ENCODE measurements at regions of chr15 and their contacts with region 1.

Region 1: DNA sequence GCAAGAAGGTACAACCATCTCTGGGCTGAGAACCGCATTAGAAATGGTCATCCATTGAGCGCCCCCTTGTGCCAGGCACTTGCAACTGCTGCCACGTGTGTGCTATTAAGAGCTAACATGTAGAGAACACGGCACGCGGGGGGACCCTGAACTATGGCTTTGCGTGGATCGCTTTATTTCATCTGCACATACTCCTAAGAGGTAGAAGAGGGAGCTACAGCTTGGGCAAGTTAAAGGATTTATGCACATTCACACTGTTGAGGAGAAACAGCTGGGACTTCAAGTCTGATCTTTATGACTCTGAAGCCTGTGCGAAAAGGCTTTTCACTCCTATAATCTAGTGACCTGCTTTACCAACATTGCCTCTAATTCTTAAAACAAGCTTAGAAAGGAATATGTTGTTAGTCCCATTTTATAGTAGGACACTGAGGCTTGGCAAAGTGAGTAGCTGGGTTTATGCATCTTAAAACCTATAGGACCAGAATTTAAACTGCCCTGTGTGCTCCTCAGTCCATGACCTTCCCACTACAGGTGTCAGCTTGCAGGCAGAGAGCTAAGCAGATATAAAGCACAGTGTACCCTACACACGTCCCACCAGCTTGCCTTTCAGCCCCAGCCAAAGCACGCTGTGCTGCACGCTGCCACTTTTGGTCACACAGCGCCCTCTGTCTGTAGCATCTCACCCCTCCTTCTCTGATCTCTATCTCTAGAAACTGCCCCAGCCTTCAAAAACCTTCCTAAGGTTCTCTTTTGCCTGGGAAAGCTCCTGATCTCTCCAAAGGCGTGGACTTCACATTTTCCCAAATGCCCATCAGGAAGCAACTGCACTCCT is 57.8 kb downstream of the STARD5 start:
- DNase-seq: peak; percentile 80
- H3K4me3 ChIP-seq: no peak overlapping the region
- H3K27ac ChIP-seq: no peak overlapping the region
- H3K4me1 ChIP-seq: peaks cover 5% of the 10 kb centered on the region
- H3K27me3 ChIP-seq: peaks cover 0 to 2% of the 10 kb centered on the region in 2 experiments
- CTCF ChIP-seq: peak; percentile 93 to 94
- POLR2A ChIP-seq: no peak

Region 2: DNA sequence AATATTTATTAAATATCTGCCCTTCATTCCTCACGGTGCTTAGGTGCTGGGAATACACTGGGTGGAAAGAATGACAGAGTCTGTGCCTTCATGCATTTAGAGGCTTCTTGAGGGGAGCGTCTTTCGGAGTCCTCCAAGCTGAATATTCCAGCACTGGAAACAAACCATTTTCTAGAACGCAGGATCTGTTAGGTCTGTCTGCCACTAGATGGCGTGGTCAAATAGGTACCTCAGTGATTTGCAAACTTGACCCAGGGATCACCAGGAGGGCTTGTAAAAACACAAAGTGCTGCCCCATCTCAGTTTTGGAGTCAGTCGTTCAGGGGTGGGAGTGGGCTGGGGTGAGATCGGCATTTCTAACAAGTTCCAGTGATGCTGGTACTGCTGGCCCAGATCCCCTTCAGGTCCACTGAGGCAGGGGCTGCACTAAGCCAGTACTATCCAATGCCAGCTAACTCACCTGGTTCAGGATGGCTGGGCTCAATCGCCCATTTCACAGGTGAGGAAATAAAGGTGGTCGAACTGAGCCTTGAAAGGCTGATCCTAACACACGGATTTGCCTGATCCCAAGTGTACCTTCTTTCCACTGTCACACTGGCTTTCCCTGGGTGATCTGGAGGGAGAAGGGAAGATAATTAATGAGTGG is 847.1 kb before region 1 on chr15:
- CTCF ChIA-PET with region 1: interaction called, 10 read pairs
- POLR2A ChIA-PET with region 1: no interaction called
- dilution Hi-C with region 1: no loop called
- intact Hi-C with region 1: loop called (anchors 2 kb)
- DNase-seq: peak; percentile 16
- H3K4me3 ChIP-seq: no peak overlapping the region
- H3K27ac ChIP-seq: no peak overlapping the region
- H3K4me1 ChIP-seq: no peaks in the 10 kb centered on the region
- H3K27me3 ChIP-seq: peaks cover 0 to 4% of the 10 kb centered on the region in 2 experiments
- CTCF ChIP-seq: peak; percentile 63 to 73
- POLR2A ChIP-seq: no peak

Region 3: DNA sequence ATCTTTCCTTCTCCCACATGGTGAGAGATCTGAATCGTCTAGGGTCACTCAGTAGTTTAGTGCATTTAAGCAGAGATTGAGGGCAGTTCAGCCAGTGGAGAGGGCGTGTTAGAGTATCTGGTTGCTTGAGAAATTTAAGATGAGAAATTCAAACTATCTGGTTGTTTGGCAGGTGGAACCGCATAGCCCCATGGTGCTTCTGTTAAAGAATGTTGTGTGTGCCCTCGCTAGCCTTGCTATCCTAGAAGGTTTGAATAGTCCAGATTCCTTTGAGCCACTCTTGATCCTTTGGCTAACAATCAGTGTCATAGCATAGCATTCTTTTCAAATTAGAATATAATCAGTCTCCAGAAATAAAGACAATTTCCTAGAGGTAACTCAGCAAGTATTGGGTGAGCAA is 539.0 kb before region 1 on chr15:
- CTCF ChIA-PET with region 1: no interaction called
- POLR2A ChIA-PET with region 1: no interaction called
- dilution Hi-C with region 1: no loop called
- intact Hi-C with region 1: no loop called
- DNase-seq: no peak
- H3K4me3 ChIP-seq: no peak overlapping the region
- H3K27ac ChIP-seq: no peak overlapping the region
- H3K4me1 ChIP-seq: no peaks in the 10 kb centered on the region
- H3K27me3 ChIP-seq: no peaks in the 10 kb centered on the region
- CTCF ChIP-seq: no peak
- POLR2A ChIP-seq: no peak

Region 4: DNA sequence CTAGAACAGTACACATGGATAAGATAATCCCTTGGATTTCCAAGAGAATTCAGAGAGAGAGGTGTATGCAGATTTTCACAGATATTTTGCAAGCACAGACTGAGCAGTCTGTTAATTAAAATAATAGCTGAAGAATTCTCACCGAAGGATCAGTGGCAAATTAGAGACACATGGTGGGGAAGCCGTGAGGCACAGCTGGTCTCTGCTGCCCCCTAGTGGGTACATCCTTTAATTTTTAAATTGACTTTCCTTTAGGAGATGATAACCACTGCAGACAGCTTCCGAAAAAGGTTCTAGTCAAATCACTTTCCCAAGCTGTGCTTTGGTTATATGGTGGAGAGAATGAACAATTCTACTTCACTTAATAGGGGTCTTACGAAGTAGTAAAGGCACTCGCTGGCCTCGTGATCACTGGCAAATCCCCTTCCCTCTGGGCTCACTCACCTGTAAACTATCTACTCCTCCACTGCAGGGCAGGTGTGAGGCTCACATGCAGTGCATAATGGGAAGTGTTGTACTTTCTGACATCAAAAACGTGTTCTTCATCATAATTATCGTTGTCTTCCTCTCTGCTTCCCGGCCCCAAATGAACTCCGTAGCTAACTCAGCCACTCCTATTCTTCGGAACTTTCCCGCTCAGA is 296.0 kb before region 1 on chr15:
- CTCF ChIA-PET with region 1: interaction called, 199 read pairs
- POLR2A ChIA-PET with region 1: no interaction called
- dilution Hi-C with region 1: no loop called
- intact Hi-C with region 1: no loop called
- DNase-seq: peak; percentile 64
- H3K4me3 ChIP-seq: no peak overlapping the region
- H3K27ac ChIP-seq: no peak overlapping the region
- H3K4me1 ChIP-seq: no peaks in the 10 kb centered on the region
- H3K27me3 ChIP-seq: no peaks in the 10 kb centered on the region
- CTCF ChIP-seq: peak; percentile 59 to 61
- POLR2A ChIP-seq: no peak

Region 5: GRCh38 chr15:81091889-81092558 is 174.1 kb before region 1 on chr15:
- CTCF ChIA-PET with region 1: interaction called, 15 read pairs
- POLR2A ChIA-PET with region 1: no interaction called
- dilution Hi-C with region 1: no loop called
- intact Hi-C with region 1: no loop called
- DNase-seq: peak; percentile 95
- H3K4me3 ChIP-seq: peak overlapping the region in 1 of 3 experiments; percentile 16
- H3K27ac ChIP-seq: peak overlapping the region; percentile 51
- H3K4me1 ChIP-seq: peaks cover 14% of the 10 kb centered on the region
- H3K27me3 ChIP-seq: no peaks in the 10 kb centered on the region
- CTCF ChIP-seq: no peak
- POLR2A ChIP-seq: no peak

Region 6: GRCh38 chr15:81133782-81134461 is 132.2 kb before region 1 on chr15 and contains the start of gene CFAP161:
- CTCF ChIA-PET with region 1: interaction called, 15 read pairs
- POLR2A ChIA-PET with region 1: no interaction called
- dilution Hi-C with region 1: no loop called
- intact Hi-C with region 1: no loop called
- DNase-seq: peak; percentile 77
- H3K4me3 ChIP-seq: peak within 1 kb of the TSS; percentile 16 to 45 (median 30)
- H3K27ac ChIP-seq: no peak within 1 kb of the TSS
- H3K4me1 ChIP-seq: peaks cover 3% of the 10 kb centered on the region
- H3K27me3 ChIP-seq: peaks cover 2 to 4% of the 10 kb centered on the region in 2 experiments
- CTCF ChIP-seq: no peak
- POLR2A ChIP-seq: no peak
- total RNA-seq, gene CFAP161: 0.65 TPM in 1 of 2 replicates, not detected in the other

Region 7: DNA sequence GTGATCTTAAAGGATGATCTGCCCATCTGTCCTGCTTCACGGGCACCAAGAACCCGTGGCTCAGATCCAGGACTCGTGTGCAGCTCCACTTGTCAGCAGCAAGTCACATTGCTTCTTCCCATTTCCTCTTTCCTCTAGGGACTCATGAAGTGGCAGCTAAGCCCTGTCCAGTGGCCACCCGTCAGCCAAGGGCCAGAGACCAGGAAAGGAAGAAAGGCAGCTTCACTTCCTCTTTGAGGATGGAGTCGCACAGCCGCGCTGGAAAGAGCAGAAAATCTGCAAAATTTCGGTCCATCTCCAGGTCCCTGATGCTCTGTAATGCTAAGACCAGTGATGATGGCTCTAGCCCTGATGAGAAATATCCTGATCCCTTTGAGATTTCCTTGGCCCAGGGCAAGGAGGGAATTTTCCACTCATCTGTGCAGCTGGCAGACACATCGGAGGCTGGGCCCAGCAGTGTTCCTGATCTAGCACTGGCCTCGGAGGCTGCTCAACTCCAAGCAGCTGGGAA is 40.9 kb before region 1 on chr15:
- CTCF ChIA-PET with region 1: interaction called, 13 read pairs
- POLR2A ChIA-PET with region 1: no interaction called
- dilution Hi-C with region 1: no loop called
- intact Hi-C with region 1: no loop called
- DNase-seq: no peak
- H3K4me3 ChIP-seq: no peak overlapping the region
- H3K27ac ChIP-seq: no peak overlapping the region
- H3K4me1 ChIP-seq: no peaks in the 10 kb centered on the region
- H3K27me3 ChIP-seq: peaks cover 0 to 3% of the 10 kb centered on the region in 2 experiments
- CTCF ChIP-seq: no peak
- POLR2A ChIP-seq: no peak

Region 8: DNA sequence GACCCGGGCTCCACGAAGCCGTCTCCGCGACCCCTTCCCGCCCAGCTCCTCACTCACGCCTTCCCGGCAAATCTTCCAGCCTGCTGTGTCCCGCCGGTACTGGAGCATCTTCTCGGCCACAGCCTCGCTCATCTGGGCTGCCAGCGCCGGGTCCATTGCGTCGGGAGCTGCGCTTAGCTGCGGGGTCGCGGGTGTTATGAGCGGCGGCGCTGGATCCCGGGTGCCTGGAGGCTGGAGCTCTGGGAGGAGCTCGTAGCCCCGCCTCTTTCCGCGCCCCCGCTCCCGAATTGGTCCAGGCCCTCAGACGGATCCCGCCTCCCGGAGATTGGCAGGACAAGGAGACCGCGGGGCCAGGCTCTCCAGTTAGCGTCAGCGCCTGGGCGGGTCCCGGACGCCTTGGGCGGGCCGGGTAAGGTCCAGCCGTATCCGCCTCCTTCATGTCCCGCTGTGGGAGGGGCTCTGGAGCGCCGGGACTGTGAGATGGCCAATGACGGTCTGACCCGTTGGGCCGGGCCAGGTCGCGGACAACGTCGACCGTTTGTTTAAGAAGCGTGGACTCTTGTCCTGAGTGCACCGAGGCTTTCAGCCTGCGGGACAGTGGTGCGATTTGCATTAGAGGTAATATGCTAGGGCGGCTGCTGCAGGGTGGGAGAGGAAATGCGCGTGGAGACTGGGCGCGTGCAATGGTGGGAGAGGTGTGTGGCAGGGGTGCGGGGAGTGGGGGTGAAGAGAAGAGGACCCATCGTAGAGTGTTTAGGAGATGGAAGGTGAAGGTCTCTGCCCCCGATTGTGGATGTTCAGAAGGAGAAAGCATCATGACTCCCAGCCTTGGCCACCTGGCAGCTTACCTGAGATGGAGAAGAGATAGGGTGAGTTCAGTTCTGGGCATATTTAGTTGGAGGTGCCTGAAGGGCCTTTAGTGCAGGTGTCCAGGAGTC is 58.1 kb after region 1 on chr15 and contains the start of gene STARD5:
- CTCF ChIA-PET with region 1: interaction called, 21 read pairs
- POLR2A ChIA-PET with region 1: no interaction called
- dilution Hi-C with region 1: no loop called
- intact Hi-C with region 1: no loop called
- DNase-seq: peak; percentile 97
- H3K4me3 ChIP-seq: peak within 1 kb of the TSS; percentile 77 to 89 (median 79)
- H3K27ac ChIP-seq: peak within 1 kb of the TSS; percentile 36
- H3K4me1 ChIP-seq: peaks cover 8% of the 10 kb centered on the region
- H3K27me3 ChIP-seq: peaks cover 0 to 3% of the 10 kb centered on the region in 2 experiments
- CTCF ChIP-seq: no peak
- POLR2A ChIP-seq: peak; percentile 46
- total RNA-seq, gene STARD5: 0.32 and 2.2 TPM in 2 replicates

Region 9: GRCh38 chr15:81427176-81427575 is 161.0 kb after region 1 on chr15:
- CTCF ChIA-PET with region 1: no interaction called
- POLR2A ChIA-PET with region 1: no interaction called
- dilution Hi-C with region 1: no loop called
- intact Hi-C with region 1: no loop called
- DNase-seq: no peak
- H3K4me3 ChIP-seq: no peak overlapping the region
- H3K27ac ChIP-seq: no peak overlapping the region
- H3K4me1 ChIP-seq: no peaks in the 10 kb centered on the region
- H3K27me3 ChIP-seq: peaks cover 0 to 1% of the 10 kb centered on the region in 2 experiments
- CTCF ChIP-seq: no peak
- POLR2A ChIP-seq: no peak

Measured in endothelial cell of umbilical vein (primary cell).